ENCODE measurements at regions of chr5 and their contacts with region 1.

Region 1: GRCh38 chr5:177497292-177498033 is at the start of gene PDLIM7:
- DNase-seq: peak; percentile 96
- H3K4me3 Mint-ChIP-seq: peak within 1 kb of the TSS; percentile 82
- H3K27ac Mint-ChIP-seq: peak within 1 kb of the TSS; percentile 23
- H3K4me1 Mint-ChIP-seq: peaks cover 27% of the 10 kb centered on the region
- H3K27me3 Mint-ChIP-seq: peaks cover 8% of the 10 kb centered on the region
- total RNA-seq, gene PDLIM7: 50.2 to 56.6 TPM

Region 2: GRCh38 chr5:177317959-177318377 is 179.5 kb before region 1 on chr5:
- CTCF ChIA-PET with region 1: interaction called, 13 read pairs
- POLR2A ChIA-PET with region 1: no interaction called
- intact Hi-C with region 1: loop called (anchors 2 kb)
- DNase-seq: peak; percentile 86
- H3K4me3 Mint-ChIP-seq: no peak overlapping the region
- H3K27ac Mint-ChIP-seq: no peak overlapping the region
- H3K4me1 Mint-ChIP-seq: peaks cover 15% of the 10 kb centered on the region
- H3K27me3 Mint-ChIP-seq: no peaks in the 10 kb centered on the region

Region 3: DNA sequence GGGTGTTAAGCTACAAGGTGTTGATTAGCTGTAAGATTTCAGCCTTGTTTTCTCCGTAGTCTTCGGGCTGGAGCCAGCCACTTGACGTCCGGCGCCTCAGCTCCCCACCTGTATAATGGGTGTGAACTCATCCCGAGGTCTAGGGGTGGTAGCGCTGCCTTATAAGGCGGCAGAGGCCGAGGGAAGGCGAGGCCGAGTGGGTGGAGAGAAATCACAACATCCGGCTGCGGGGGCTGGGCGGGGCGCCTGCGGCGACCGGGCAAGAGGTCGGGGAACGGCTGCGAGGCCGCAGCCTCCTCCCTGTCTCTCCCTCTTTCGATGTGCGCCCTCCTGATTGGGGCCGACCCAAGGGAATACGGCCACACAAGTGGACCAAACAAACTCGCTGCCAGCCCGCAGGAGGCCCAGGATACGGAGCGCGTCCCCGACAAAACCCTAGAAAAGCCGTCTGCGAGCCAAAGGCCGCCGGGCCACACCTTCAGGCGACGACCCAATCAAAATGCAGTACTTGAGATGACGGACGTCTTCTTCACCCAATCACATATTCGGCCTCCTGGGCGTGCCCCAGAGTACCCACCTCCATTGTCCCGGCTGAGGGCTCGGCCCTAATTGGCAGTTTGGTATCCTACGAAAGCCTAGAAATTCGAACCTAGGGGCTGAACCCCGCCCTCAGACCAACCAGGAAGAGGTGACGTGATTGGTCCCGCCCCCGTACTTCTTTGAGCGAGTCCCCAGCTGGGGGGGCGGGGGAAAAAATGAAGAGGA is 71.5 kb before region 1 on chr5:
- CTCF ChIA-PET with region 1: interaction called, 4 read pairs
- POLR2A ChIA-PET with region 1: interaction called, 3 read pairs
- intact Hi-C with region 1: loop called (anchors 1 kb)
- DNase-seq: peak; percentile 100
- H3K4me3 Mint-ChIP-seq: peak overlapping the region; percentile 87
- H3K27ac Mint-ChIP-seq: peak overlapping the region; percentile 94
- H3K4me1 Mint-ChIP-seq: peaks cover 35% of the 10 kb centered on the region
- H3K27me3 Mint-ChIP-seq: no peaks in the 10 kb centered on the region

Region 4: GRCh38 chr5:177478711-177479646 is 18.5 kb before region 1 on chr5:
- CTCF ChIA-PET with region 1: interaction called, 3 read pairs
- POLR2A ChIA-PET with region 1: interaction called, 4 read pairs
- intact Hi-C with region 1: loop called (anchors 2 kb)
- DNase-seq: peak; percentile 44
- H3K4me3 Mint-ChIP-seq: no peak overlapping the region
- H3K27ac Mint-ChIP-seq: peak overlapping the region; percentile 84
- H3K4me1 Mint-ChIP-seq: peaks cover 27% of the 10 kb centered on the region
- H3K27me3 Mint-ChIP-seq: peaks cover 3% of the 10 kb centered on the region

Region 5: DNA sequence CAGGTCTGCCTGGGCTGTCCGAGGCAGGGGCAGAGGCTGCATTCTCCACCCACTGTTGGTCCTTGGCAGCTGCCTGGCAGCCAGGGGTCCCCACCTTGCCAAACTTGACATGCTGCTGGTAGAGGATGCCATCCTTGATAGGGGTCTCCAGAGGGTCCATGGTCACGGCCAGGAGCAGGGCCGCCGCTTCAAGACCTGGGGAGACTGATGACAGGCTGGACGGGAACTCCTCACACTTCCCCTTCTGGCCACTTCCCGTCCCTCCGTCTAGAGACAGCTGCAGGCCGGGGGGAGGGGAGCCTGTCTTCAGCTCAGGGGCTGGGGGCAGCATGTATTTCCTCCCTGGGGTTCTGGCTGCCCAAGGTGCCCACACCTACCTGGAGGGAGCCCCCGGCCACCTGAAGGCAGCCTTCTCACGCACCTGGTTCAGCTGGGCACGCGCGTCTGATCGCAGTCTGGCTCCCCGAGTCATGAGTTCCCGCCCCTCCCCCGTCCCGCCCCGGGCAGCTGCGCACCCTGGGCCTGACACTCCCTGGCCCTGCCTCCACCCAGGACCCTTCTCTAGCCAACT is 12.0 kb after region 1 on chr5 and contains the start of gene DOK3:
- CTCF ChIA-PET with region 1: interaction called, 43 read pairs
- POLR2A ChIA-PET with region 1: no interaction called
- intact Hi-C with region 1: no loop called
- DNase-seq: no peak
- H3K4me3 Mint-ChIP-seq: no peak within 1 kb of the TSS
- H3K27ac Mint-ChIP-seq: no peak within 1 kb of the TSS
- H3K4me1 Mint-ChIP-seq: peaks cover 2% of the 10 kb centered on the region
- H3K27me3 Mint-ChIP-seq: no peaks in the 10 kb centered on the region
- total RNA-seq, gene DOK3: 0.52 to 1.3 TPM

Region 6: DNA sequence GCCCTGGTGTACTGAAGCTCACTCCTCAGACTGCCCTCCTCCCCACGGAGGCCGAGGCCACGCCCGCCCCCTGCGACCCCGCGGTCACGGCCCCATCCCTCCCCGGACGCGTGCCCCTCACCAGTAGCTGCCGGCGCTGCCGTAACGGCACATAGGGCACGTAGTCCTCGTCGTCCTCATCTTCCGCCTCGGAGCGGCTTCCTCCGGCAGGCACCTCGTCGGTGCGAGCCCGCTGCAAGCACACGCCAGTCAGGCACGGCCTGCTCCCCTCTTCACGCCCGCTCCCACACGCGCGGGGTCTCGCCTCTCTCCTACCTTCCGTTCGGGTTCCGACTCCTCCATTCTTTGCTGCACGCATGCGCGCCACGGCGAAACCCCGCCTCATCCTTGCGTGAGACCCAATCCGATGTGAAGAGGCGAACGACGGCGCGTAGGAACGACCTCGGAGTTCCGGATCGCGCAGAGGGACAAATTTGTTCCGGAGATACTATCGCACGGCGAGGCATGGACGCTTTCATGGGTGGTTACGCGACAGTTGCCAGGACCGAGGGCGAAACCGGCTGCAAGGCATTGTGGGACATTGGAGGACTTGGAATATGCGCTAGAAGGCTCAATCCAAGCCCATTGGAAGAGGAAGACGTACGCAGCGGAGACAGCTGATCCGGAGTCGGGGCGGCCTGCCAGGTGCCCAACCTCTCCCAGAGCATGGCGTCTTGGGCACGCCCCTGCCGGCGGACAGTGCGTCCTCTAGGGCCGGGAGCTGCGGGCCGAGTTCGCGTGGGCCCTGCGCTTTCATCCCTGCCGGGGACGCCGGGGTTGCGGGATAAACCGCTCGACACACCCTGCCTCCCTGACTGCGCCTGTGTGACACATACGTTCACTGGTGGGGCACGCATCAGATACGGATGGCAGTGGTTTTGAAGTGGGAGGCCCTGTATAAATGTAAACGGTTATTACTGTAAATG is 19.4 kb after region 1 on chr5 and contains the start of gene DDX41:
- CTCF ChIA-PET with region 1: interaction called, 43 read pairs
- POLR2A ChIA-PET with region 1: interaction called, 3 read pairs
- intact Hi-C with region 1: loop called (anchors 1 kb)
- DNase-seq: peak; percentile 98
- H3K4me3 Mint-ChIP-seq: peak within 1 kb of the TSS; percentile 88
- H3K27ac Mint-ChIP-seq: peak within 1 kb of the TSS; percentile 83
- H3K4me1 Mint-ChIP-seq: peaks cover 46% of the 10 kb centered on the region
- H3K27me3 Mint-ChIP-seq: no peaks in the 10 kb centered on the region
- total RNA-seq, gene DDX41: 143 to 145 TPM

Measured in activated CD4-positive, alpha-beta memory T cell treated with anti-CD3 and anti-CD28 coated beads for 36 hours (primary cell).